GM13976 (cell line): ENCODE measurements at regions of chr14 and their contacts with region 1.

Region 1: GRCh38 chr14:103518422-103519042 is 4.1 kb downstream of the CKB start:
- DNase-seq: peak; percentile 89
- CTCF ChIP-seq: peak; percentile 89

Region 2: GRCh38 chr14:103188810-103189503 is 329.6 kb before region 1 on chr14:
- in situ Hi-C with region 1: no loop called
- DNase-seq: peak; percentile 47
- CTCF ChIP-seq: no peak

Region 3: DNA sequence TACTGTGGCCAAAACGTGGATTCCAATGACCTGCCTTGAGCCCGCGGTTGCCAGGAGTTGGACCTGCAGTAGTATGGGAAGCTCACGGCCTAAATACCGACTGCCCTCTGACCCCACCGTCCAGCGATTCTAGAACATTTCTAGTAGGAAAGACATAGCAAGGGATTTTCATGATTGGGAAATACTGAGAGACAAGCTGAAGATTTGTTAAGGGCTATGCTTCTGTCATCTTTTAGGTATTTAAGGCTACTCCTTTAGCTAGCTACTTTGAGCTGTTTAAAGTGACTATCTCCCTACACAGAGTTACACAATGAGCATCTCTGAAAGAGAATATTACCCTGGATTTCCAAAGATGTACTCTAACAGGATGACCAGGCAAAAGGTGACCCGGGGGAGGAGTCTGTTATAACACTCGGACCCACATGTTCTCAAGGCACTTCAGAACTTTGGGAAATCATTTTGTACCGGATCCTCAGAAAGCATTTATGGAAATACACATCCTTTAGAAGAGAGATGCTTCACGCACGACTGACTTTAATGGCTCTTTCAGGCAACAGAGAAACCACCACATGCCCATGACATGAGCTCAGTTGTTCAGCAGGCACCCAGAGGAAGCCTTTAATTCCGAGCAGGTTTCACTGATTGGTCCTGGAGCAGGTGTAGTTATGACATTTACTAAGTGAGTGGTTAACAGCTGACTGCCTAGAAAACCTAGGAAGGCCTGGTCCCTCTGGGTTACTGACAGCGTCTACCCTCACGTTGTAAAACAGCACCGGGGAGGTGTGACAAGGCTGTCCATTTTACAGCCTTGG is 39.7 kb after region 1 on chr14:
- in situ Hi-C with region 1: loop called (anchors 5 kb)
- DNase-seq: no peak
- CTCF ChIP-seq: no peak

Region 4: DNA sequence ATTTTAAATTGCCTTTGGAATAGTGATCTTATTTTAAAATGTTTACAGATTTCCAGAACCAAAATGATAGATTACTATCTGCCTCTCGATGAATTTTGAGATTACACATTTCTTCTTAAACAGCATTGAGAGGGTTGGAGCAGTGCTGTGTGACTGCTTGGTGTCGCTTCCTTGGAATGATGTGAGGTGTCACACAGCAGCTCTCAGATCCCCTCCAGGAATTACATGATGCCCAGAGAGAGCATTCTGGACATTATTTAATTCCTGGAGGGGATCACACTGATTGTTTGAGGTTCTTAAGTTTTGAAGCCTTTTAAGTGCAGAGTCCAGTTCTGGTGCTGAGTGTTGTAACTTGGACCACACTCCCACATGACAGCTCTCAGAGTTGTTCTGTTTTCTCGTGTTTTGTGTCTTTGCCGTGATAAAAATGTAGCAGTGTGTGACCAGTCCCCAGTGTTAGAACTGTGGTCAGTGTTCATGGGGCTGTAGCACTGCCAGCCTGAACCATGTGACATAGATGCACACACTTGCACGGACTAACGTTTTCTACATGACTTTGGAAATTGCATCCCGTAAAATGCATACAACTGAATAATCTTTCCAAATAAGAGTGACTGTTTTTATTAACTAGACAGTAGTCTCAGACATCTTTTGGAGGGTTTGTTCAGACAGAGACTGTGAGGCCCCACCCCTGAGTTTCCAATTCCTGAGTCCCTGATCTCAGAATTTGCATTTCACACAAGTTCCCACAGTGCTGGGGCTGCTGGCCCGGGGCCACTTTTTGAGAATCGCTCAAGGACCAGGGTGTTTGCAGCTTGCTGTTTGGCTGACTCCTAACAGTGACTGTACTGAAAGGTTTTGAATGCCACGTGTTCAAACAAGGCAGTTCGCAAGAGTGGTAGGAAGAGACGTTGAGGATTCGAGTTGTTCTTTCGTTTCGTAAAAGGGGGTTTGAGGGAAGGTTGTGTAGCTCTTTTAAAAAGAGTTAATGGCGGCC is 170.7 kb after region 1 on chr14:
- in situ Hi-C with region 1: no loop called
- DNase-seq: peak; percentile 82
- CTCF ChIP-seq: no peak